Activated naive CD4-positive, alpha-beta T cell treated with anti-CD3 and anti-CD28 coated beads, Interleukin-2, amount 10 ng/mL, durations not matched to agents 7 days and 5 days (primary cell): ENCODE measurements at regions of chr19 and their contacts with region 1.

Region 1: DNA sequence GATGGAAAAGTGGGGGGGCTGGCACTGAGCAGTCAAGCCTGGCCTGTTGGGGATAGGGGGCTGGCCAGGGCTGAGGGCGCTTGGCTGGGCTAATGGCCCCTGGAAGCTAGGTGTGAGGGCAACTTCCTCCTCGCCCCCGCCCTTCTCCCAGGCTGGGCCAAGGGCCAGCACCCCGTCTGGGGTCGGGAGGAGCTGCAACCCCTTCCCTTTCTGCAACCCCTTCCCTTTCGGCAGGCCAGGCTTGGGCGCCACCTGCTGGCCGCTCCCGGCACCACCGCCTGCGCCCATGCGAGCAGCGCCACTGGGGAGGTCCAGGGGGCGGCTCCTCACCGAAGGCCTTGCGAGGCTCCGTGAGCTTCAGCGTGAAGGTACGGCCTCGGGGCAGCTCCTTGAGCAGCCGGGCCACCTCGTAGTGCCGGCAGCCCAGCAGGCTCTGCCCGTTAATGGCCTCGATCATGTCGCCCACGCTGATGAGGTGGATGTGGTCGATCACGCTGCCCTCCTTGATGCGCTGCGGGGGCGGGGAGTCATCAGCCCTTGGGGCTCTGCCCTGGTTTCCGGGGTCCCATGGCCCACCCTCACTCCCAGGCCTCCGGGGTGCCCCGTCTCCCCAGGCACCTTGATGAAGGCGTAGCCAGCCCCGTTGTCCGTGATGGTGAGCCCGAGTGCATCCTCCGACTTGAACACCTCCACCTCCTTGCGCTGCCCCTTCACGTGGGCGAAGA is 5.0 kb upstream of the PTGER1 start:
- DNase-seq: peak; percentile 82
- H3K4me3 Mint-ChIP-seq: no peak overlapping the region
- H3K27ac Mint-ChIP-seq: no peak overlapping the region
- H3K4me1 Mint-ChIP-seq: peaks cover 21% of the 10 kb centered on the region
- H3K27me3 Mint-ChIP-seq: peaks cover 17% of the 10 kb centered on the region

Region 2: GRCh38 chr19:14375055-14375581 is 105.0 kb before region 1 on chr19:
- CTCF ChIA-PET with region 1: no interaction called
- DNase-seq: peak; percentile 90
- H3K4me3 Mint-ChIP-seq: peak overlapping the region; percentile 50
- H3K27ac Mint-ChIP-seq: peak overlapping the region; percentile 98
- H3K4me1 Mint-ChIP-seq: peaks cover 77% of the 10 kb centered on the region
- H3K27me3 Mint-ChIP-seq: no peaks in the 10 kb centered on the region

Region 3: GRCh38 chr19:14425696-14426138 is 54.4 kb before region 1 on chr19:
- CTCF ChIA-PET with region 1: interaction called, 31 read pairs
- DNase-seq: no peak
- H3K4me3 Mint-ChIP-seq: no peak overlapping the region
- H3K27ac Mint-ChIP-seq: no peak overlapping the region
- H3K4me1 Mint-ChIP-seq: peaks cover 8% of the 10 kb centered on the region
- H3K27me3 Mint-ChIP-seq: peaks cover 42% of the 10 kb centered on the region

Region 4: DNA sequence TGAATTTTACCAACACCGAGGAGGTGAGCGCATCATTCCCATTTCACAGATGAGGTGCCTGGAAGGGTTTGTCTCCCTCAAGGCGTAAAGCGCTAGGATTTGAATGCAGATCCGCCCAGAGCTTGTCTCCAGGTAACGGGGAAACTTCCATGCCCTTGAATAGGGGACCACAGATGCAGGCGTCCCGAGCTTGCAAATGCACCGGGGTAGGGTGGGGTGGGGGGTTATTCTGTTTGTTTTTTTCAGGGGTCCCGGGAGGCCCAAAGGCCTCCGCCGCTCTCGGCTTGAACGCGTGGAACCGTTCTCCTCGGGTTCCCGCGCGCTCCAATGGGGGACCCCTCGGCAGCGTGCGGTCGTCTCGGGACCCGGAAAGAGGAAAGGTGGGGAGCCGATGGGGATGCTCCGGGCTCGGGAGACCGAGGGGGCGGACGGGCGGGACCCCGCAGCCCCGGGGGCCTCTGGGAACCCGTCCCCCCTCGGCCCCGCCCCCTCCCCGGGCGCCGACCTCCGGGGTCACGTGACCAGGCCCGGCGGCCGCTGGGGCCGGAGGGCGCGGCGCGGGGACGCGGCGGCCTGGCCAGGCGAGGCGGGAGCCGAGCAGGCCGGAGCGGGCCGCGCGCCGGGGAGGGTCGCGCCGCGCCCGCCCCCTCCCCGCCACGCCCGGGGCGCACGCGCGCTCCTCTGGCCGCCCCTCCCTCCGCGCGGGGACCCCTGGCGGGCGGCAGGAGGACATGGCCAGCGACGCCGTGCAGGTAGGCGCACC is 47.2 kb before region 1 on chr19 and contains the start of gene PKN1:
- CTCF ChIA-PET with region 1: interaction called, 31 read pairs
- DNase-seq: peak; percentile 69
- H3K4me3 Mint-ChIP-seq: peak within 1 kb of the TSS; percentile 79
- H3K27ac Mint-ChIP-seq: peak within 1 kb of the TSS; percentile 84
- H3K4me1 Mint-ChIP-seq: peaks cover 43% of the 10 kb centered on the region
- H3K27me3 Mint-ChIP-seq: peaks cover 36% of the 10 kb centered on the region

Region 5: GRCh38 chr19:14496028-14496833 is 16.1 kb after region 1 on chr19 and contains the start of gene GIPC1:
- CTCF ChIA-PET with region 1: interaction called, 19 read pairs
- DNase-seq: peak; percentile 88
- H3K4me3 Mint-ChIP-seq: peak within 1 kb of the TSS; percentile 85
- H3K27ac Mint-ChIP-seq: peak within 1 kb of the TSS; percentile 84
- H3K4me1 Mint-ChIP-seq: peaks cover 33% of the 10 kb centered on the region
- H3K27me3 Mint-ChIP-seq: peaks cover 26% of the 10 kb centered on the region